ENCODE measurements at regions of chr6 and their contacts with region 1.

Region 1: DNA sequence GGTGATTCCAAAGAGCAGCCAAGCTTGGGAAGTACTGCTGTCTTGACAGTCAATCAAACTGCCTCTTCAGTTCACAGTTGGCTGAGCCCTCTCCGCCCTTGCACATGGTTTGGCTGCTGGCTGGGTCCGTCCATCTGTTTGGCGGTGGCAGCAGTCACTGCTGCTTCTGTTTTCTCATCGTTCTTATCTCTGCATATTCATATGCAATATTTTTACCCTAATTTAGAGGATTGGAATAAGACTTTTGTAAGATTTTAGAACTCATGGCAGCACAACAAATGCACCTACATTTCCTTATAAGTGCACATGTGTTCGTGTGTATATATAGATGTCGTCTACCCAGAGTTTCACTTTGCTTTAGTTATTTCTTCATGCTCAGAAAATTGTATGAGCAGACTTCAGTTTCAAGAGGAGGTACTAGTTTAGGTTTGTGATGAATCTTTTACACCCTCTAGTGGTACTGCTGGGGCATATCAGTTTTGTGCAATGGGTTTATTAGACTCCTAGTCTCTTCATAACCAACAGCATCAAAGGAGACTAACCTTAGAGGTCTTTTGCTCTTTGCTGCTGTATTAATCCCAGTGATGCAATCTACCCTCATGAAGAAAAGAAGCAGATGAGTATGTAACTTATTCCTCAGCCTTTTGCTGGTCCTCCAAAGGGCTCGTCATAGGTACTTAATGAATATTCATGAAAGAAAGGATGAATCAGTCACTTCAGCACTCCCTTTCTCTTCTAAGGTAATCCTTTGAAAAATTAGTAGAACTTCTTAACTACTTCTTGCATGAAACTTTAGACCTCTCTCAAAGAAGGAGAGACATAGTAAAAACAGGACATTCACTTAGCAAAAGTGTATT is 44.3 kb downstream of the KHDC1L start:
- DNase-seq: peak in 15 of 42 donors; percentile 18 to 62 (median 34)

Region 2: DNA sequence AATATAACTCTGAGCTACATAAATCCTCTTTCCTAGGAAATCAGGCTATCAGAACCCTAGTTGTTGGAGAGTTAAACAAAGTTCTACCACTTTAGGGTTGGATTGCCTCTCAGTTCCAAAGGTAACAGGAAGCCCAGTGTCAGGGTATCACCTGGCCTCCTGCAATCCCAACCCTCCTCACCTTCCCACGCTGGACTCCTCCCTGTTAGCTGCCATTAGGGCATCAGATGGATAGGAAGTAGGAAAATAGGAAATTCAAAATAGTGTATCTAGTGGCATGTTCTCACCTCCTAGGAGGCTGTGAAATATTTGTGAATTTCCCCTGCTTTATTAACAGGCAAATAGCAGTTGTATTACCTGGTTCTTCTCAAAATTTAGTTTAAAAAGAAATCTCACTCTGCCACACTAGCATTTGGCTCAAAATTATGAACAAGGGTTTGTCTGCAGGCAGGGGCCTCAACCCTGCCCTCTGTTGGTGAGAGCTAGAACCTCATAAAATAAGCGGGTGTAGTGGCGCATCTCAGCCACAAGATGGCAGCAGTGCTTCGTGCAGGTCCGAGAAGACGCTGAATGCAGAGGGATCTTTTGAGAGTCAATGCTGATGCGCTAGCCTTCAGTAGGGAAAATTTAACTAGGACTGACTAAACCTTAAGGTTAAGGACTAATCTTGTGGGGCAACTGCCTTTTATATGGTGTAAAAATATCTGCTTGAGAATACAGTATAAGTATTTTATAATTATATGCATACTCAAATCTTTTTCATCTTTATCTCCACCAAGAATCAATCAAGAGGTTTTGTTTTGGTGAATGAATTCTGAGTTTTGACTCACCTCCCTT is 768.9 kb before region 1 on chr6:
- intact Hi-C with region 1: loop called (anchors 5 kb)
- DNase-seq: peak; percentile 49 to 94 (median 83)